Activated CD4-positive, alpha-beta memory T cell treated with anti-CD3 and anti-CD28 coated beads, Interleukin-2, amount 10 ng/mL, durations not matched to agents 7 days and 5 days (primary cell): ENCODE measurements at regions of chr2 and their contacts with region 1.

Region 1: DNA sequence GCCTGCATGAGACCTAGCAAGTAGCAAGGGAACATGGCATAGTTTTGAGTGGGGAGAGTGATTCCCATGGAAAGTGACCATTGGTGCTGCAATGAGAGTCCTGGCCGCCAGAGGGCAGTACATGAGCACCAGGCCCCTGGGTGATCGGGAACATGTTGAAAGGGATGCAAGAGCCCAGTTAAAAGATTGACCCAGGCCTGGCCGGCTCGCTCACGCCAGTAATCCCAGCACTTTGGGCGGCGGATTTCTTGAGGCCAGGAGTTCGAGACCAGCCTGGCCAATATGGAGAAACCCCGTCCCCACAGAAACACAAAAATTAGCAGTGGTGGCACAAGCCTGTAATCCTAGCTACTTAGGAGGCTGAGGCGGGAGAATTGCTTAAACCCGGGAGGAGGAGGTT is 22.2 kb downstream of the FAP start:
- DNase-seq: peak; percentile 66
- H3K4me3 Mint-ChIP-seq: no peak overlapping the region
- H3K27ac Mint-ChIP-seq: no peak overlapping the region
- H3K4me1 Mint-ChIP-seq: no peaks in the 10 kb centered on the region
- H3K27me3 Mint-ChIP-seq: peaks cover 21% of the 10 kb centered on the region

Region 2: DNA sequence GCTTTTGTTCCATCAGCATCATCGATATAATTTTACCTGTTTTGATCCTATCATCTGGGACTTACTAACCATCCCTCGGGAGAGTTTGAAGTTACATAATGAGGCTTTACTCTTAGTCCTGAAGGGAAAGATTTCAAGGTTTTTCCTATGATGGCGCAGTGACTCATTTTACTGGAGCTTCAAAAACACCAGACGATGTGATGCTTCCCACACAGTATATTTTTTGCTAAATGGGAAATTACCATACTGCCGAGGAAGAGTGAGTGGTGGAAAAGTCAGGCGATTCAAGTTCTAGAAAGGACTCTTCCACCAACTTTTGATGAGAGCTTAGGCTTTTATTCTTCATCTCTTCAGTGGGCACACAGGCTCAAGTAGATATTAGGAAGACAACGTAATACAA is 24.4 kb before region 1 on chr2:
- CTCF ChIA-PET with region 1: interaction called, 11 read pairs
- POLR2A ChIA-PET with region 1: no interaction called
- DNase-seq: no peak
- H3K4me3 Mint-ChIP-seq: no peak overlapping the region
- H3K27ac Mint-ChIP-seq: no peak overlapping the region
- H3K4me1 Mint-ChIP-seq: no peaks in the 10 kb centered on the region
- H3K27me3 Mint-ChIP-seq: peaks cover 31% of the 10 kb centered on the region

Region 3: DNA sequence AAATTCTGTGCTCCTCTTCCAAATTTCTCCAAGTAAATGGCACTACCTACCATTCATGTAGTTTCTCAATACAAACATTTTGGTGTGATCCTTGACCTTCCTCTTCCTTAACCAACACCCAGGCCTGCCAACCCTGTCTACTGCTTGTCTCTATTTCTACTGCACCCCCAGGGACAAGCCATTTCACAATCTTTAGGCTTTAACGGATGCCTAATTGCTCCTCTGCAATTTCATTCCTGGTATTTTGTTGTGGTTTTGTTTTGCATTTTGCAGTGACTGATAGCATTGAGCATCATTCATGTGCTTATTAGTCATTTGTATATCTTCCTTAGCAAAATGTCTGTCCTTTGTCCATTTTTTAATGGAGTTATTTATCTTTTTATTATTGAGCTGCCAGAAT is 12.1 kb after region 1 on chr2:
- CTCF ChIA-PET with region 1: interaction called, 22 read pairs
- POLR2A ChIA-PET with region 1: no interaction called
- DNase-seq: no peak
- H3K4me3 Mint-ChIP-seq: no peak overlapping the region
- H3K27ac Mint-ChIP-seq: no peak overlapping the region
- H3K4me1 Mint-ChIP-seq: no peaks in the 10 kb centered on the region
- H3K27me3 Mint-ChIP-seq: peaks cover 14% of the 10 kb centered on the region

Region 4: DNA sequence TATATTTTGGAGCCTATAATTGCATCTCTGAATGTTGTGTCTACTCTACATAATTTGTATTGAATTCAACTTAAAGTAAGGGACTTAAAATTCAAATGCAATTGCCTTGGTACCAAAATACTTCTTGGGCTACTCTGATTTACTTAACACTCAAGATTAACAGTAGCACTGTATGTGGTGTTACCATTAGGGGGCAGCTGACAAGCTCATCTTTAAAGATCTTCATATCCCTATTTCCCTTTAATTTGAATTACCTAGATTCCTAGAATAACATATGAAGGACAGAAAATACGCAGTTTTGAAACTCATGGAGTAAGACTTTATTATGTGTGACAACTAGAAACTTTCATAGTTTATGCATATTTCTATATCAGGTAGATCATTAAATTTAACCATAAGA is 59.6 kb after region 1 on chr2:
- CTCF ChIA-PET with region 1: interaction called, 15 read pairs
- POLR2A ChIA-PET with region 1: interaction called, 4 read pairs
- DNase-seq: no peak
- H3K4me3 Mint-ChIP-seq: no peak overlapping the region
- H3K27ac Mint-ChIP-seq: no peak overlapping the region
- H3K4me1 Mint-ChIP-seq: peaks cover 7% of the 10 kb centered on the region
- H3K27me3 Mint-ChIP-seq: no peaks in the 10 kb centered on the region

Region 5: GRCh38 chr2:162333968-162334367 is 112.9 kb after region 1 on chr2:
- CTCF ChIA-PET with region 1: interaction called, 29 read pairs
- POLR2A ChIA-PET with region 1: no interaction called
- DNase-seq: no peak
- H3K4me3 Mint-ChIP-seq: no peak overlapping the region
- H3K27ac Mint-ChIP-seq: no peak overlapping the region
- H3K4me1 Mint-ChIP-seq: peaks cover under 1% of the 10 kb centered on the region
- H3K27me3 Mint-ChIP-seq: no peaks in the 10 kb centered on the region